GM12878 (cell line): ENCODE measurements at regions of chr18 and their contacts with region 1.

Region 1: GRCh38 chr18:12990967-12991838 is at the start of gene CEP192:
- DNase-seq: peak; percentile 96
- ATAC-seq: peak; percentile 91
- H3K4me3 ChIP-seq: peak within 1 kb of the TSS; percentile 76
- H3K27ac ChIP-seq: peak within 1 kb of the TSS; percentile 94
- H3K4me1 ChIP-seq: peaks cover 10% of the 10 kb centered on the region
- H3K27me3 ChIP-seq: no peaks in the 10 kb centered on the region
- CTCF ChIP-seq: no peak
- EP300 ChIP-seq: peak in 1 of 2 experiments; percentile 17; a peak in 1 of 4 replicates
- POLR2A ChIP-seq: peak; percentile 98
- RAD21 ChIP-seq: no peak
- polyA plus RNA-seq, gene CEP192: 15.4 to 24.5 TPM

Region 2: GRCh38 chr18:12777500-12777944 is 213.7 kb before region 1 on chr18:
- CTCF ChIA-PET with region 1: no interaction called
- POLR2A ChIA-PET with region 1: no interaction called
- RAD21 ChIA-PET with region 1: no interaction called
- SMC1A ChIA-PET with region 1: no interaction called
- in situ Hi-C with region 1: no loop called
- intact Hi-C with region 1: no loop called
- DNase-seq: no peak
- ATAC-seq: no peak
- H3K4me3 ChIP-seq: no peak overlapping the region
- H3K27ac ChIP-seq: no peak overlapping the region
- H3K4me1 ChIP-seq: no peaks in the 10 kb centered on the region
- H3K27me3 ChIP-seq: no peaks in the 10 kb centered on the region; a peak in 1 of 4 replicates
- CTCF ChIP-seq: no peak
- EP300 ChIP-seq: no peak
- POLR2A ChIP-seq: no peak
- RAD21 ChIP-seq: no peak

Region 3: DNA sequence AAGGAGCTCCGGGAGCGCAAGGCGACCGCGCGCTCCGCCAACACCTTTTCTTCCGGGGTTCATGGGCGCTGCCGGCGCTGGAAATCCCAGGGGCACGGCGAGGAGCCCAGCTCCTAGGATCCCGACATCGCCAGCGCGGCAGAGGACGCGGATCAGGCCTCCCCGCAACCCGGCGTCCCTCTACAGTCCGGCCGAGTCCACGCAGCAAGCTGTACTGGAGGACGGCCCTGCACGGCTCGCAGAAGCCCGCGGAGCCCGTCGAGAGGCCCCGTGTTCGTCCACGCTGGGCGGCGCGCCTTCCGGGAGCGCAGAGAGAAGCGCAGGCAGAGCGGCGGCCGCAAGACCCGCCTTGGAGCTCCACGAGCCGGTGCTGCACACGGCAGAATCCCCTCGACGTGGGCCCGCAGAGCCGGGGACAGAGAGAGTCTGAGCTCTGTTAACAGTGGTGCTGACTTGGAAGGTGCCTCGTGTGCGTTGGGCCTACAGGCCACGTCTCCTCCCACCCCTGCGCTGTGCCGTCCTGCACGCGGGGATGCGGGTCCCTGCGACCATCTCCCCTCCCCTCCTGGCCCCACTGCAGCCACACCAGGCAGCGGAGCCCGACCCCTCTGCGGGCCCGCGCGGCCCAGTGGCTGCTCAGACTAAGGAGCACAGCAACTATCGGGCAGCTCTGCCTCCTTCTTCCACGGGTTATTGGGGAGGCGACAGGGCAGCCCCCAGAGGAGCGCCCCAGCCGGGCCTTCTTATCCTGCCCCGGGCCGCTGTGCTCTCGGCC is 79.1 kb before region 1 on chr18:
- CTCF ChIA-PET with region 1: no interaction called
- POLR2A ChIA-PET with region 1: no interaction called
- RAD21 ChIA-PET with region 1: no interaction called
- SMC1A ChIA-PET with region 1: no interaction called
- in situ Hi-C with region 1: no loop called
- intact Hi-C with region 1: no loop called
- DNase-seq: no peak
- ATAC-seq: no peak
- H3K4me3 ChIP-seq: no peak overlapping the region
- H3K27ac ChIP-seq: no peak overlapping the region
- H3K4me1 ChIP-seq: no peaks in the 10 kb centered on the region; the same call in 1 of the 2 replicates
- H3K27me3 ChIP-seq: peaks cover under 1 to 2% of the 10 kb centered on the region in 2 experiments; a peak in 2 of 4 replicates
- CTCF ChIP-seq: no peak
- EP300 ChIP-seq: no peak
- POLR2A ChIP-seq: no peak
- RAD21 ChIP-seq: no peak

Region 4: DNA sequence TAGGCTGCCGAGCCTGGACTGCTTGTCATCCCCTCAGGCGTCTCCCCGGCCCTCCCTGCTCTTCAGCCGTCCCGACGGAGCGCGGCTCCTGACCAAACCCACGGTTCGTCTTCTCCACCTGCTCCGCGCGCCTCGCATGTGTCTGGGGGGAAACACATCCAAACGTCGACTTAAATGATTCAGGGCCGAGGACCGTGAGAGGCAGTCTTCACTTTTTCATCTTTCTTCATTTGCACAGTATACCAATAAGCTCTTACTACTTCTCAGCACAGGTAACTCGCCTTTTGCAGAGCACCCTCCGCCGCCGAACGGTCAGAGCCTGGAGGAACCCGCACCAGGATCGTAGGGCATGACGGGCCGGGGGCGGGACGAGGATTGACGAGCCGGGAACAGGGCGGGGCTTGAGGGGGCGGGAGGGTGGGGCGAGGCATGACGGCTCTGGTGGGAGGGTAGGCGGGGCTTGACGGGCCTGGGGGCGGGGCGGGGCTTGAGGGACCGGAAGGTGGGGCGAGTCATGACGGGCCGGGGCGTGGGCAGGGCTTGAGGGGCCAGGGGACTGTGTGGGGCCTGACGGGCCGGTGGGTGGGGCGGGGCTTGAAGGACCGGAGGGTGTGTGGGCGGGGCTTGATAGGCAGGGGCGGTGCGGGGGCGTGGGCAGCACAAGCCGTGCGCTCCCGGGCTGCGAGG is 43.7 kb before region 1 on chr18 and contains the start of gene SEH1L:
- CTCF ChIA-PET with region 1: no interaction called
- POLR2A ChIA-PET with region 1: interaction called, 11 read pairs
- RAD21 ChIA-PET with region 1: interaction called, 5 read pairs
- SMC1A ChIA-PET with region 1: no interaction called
- in situ Hi-C with region 1: no loop called
- intact Hi-C with region 1: loop called (anchors 2 kb)
- DNase-seq: peak; percentile 89
- ATAC-seq: peak; percentile 92
- H3K4me3 ChIP-seq: peak within 1 kb of the TSS; percentile 92
- H3K27ac ChIP-seq: peak within 1 kb of the TSS; percentile 87
- H3K4me1 ChIP-seq: peaks cover 4% of the 10 kb centered on the region; the same call in 1 of the 2 replicates
- H3K27me3 ChIP-seq: no peaks in the 10 kb centered on the region
- CTCF ChIP-seq: no peak
- EP300 ChIP-seq: no peak
- POLR2A ChIP-seq: 0 out of 2 replicates have a peak, but pooled peaks have one; percentile 7
- RAD21 ChIP-seq: no peak
- polyA plus RNA-seq, gene SEH1L: 27.5 to 52.4 TPM

Region 5: GRCh38 chr18:13003466-13003896 is 12.3 kb after region 1 on chr18:
- CTCF ChIA-PET with region 1: interaction called, 7 read pairs
- POLR2A ChIA-PET with region 1: interaction called, 17 read pairs
- RAD21 ChIA-PET with region 1: interaction called, 4 read pairs
- SMC1A ChIA-PET with region 1: interaction called, 8 read pairs
- in situ Hi-C with region 1: no loop called
- intact Hi-C with region 1: no loop called
- DNase-seq: no peak
- ATAC-seq: peak; percentile 83
- H3K4me3 ChIP-seq: no peak overlapping the region
- H3K27ac ChIP-seq: no peak overlapping the region
- H3K4me1 ChIP-seq: peaks cover 20% of the 10 kb centered on the region
- H3K27me3 ChIP-seq: no peaks in the 10 kb centered on the region
- CTCF ChIP-seq: peak; percentile 52 to 57 (median 57); a peak in 5 of 6 replicates
- EP300 ChIP-seq: no peak
- POLR2A ChIP-seq: no peak
- RAD21 ChIP-seq: peak; percentile 37; the same call in 1 of the 2 replicates

Region 6: GRCh38 chr18:13137670-13138419 is 146.6 kb after region 1 on chr18:
- CTCF ChIA-PET with region 1: no interaction called
- POLR2A ChIA-PET with region 1: no interaction called
- RAD21 ChIA-PET with region 1: no interaction called
- SMC1A ChIA-PET with region 1: interaction called, 3 read pairs
- in situ Hi-C with region 1: no loop called
- intact Hi-C with region 1: loop called (anchors 5 kb)
- DNase-seq: peak; percentile 77
- ATAC-seq: peak; percentile 89
- H3K4me3 ChIP-seq: peak overlapping the region; percentile 82
- H3K27ac ChIP-seq: peak overlapping the region; percentile 38
- H3K4me1 ChIP-seq: peaks cover 12% of the 10 kb centered on the region
- H3K27me3 ChIP-seq: no peaks in the 10 kb centered on the region
- CTCF ChIP-seq: no peak
- EP300 ChIP-seq: no peak
- POLR2A ChIP-seq: no peak
- RAD21 ChIP-seq: no peak

Region 7: GRCh38 chr18:13566941-13567746 is 575.9 kb after region 1 on chr18:
- CTCF ChIA-PET with region 1: no interaction called
- POLR2A ChIA-PET with region 1: interaction called, 3 read pairs
- RAD21 ChIA-PET with region 1: no interaction called
- SMC1A ChIA-PET with region 1: no interaction called
- in situ Hi-C with region 1: no loop called
- intact Hi-C with region 1: loop called (anchors 10 kb)
- DNase-seq: peak; percentile 89
- ATAC-seq: peak; percentile 71
- H3K4me3 ChIP-seq: peak overlapping the region; percentile 57
- H3K27ac ChIP-seq: peak overlapping the region; percentile 100
- H3K4me1 ChIP-seq: peaks cover 76% of the 10 kb centered on the region
- H3K27me3 ChIP-seq: no peaks in the 10 kb centered on the region
- CTCF ChIP-seq: 0 out of 6 replicates have a peak, but pooled peaks of 1 of the 3 experiments have one; percentile 7
- EP300 ChIP-seq: peak; percentile 84 to 97; a peak in 3 of 4 replicates
- POLR2A ChIP-seq: peak; percentile 91
- RAD21 ChIP-seq: peak; percentile 21; the same call in 1 of the 2 replicates

Region 8: GRCh38 chr18:13726232-13726971 is 735.2 kb after region 1 on chr18 and contains the starts of genes FAM210A and RNMT:
- CTCF ChIA-PET with region 1: no interaction called
- POLR2A ChIA-PET with region 1: no interaction called
- RAD21 ChIA-PET with region 1: no interaction called
- SMC1A ChIA-PET with region 1: no interaction called
- in situ Hi-C with region 1: no loop called
- intact Hi-C with region 1: loop called (anchors 10 kb)
- DNase-seq: peak; percentile 86
- ATAC-seq: peak; percentile 95
- H3K4me3 ChIP-seq: peak within 1 kb of the TSS; percentile 87
- H3K27ac ChIP-seq: peak within 1 kb of the TSS; percentile 84
- H3K4me1 ChIP-seq: peaks cover 5% of the 10 kb centered on the region
- H3K27me3 ChIP-seq: no peaks in the 10 kb centered on the region
- CTCF ChIP-seq: peak in 2 of 3 experiments; percentile 3 to 43; a peak in 2 of 6 replicates
- EP300 ChIP-seq: peak; percentile 43; a peak in 2 of 4 replicates
- POLR2A ChIP-seq: peak; percentile 89
- RAD21 ChIP-seq: no peak
- polyA plus RNA-seq, gene FAM210A: 10.3 to 12.7 TPM
- polyA plus RNA-seq, gene RNMT: 44.5 to 63.2 TPM